ENCODE measurements at regions of chr1 and their contacts with region 1.

Region 1: DNA sequence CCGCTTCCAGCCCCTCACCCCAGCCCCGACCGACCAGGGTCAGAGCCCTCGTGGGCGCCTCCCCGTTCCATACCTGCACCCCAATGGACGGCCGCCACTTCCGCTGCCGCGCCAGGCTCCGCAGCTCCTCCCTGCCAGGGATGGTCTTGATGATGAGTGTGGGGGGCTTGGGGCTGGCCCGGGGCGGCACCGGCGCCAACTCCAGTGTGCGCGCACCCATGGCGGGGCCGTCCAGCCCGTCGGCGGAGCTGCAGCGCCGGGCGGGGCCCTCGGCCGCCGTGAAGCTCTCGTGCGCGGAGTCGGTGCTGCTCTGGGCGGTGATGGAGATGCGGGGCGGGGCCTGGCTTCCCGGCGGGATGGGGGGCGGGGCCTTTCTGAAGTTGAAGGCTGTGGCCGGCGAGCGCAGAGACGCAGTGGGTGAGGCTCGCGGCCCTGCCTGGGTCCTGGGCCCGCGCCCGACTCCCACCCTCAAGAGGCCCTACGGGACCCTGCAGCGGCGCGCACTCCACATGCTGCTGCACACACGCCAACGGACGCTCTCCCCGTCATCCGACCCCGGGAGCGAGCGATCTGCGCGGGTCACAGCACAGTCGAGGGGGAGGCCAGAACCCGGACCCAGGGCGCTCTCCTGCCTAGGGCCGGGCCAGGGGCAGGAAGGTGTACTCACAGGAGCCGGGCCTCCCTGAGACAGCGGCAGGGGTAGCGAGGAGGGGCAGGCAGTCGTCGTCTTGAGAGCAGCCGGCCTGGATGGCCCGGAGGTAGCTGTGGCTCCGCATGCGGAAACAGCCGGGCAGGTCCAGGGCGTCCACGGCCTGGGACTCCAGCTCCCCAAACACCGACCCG is 26.1 kb upstream of the SMIM12 start:
- DNase-seq: peak; percentile 88
- ATAC-seq: peak; percentile 88
- H3K4me3 Mint-ChIP-seq: peak overlapping the region; percentile 88
- H3K27ac Mint-ChIP-seq: no peak overlapping the region
- H3K4me1 Mint-ChIP-seq: peaks cover 7% of the 10 kb centered on the region; the same call in 1 of the 2 replicates
- H3K27me3 Mint-ChIP-seq: peaks cover 40% of the 10 kb centered on the region
- CTCF ChIP-seq: no peak

Region 2: DNA sequence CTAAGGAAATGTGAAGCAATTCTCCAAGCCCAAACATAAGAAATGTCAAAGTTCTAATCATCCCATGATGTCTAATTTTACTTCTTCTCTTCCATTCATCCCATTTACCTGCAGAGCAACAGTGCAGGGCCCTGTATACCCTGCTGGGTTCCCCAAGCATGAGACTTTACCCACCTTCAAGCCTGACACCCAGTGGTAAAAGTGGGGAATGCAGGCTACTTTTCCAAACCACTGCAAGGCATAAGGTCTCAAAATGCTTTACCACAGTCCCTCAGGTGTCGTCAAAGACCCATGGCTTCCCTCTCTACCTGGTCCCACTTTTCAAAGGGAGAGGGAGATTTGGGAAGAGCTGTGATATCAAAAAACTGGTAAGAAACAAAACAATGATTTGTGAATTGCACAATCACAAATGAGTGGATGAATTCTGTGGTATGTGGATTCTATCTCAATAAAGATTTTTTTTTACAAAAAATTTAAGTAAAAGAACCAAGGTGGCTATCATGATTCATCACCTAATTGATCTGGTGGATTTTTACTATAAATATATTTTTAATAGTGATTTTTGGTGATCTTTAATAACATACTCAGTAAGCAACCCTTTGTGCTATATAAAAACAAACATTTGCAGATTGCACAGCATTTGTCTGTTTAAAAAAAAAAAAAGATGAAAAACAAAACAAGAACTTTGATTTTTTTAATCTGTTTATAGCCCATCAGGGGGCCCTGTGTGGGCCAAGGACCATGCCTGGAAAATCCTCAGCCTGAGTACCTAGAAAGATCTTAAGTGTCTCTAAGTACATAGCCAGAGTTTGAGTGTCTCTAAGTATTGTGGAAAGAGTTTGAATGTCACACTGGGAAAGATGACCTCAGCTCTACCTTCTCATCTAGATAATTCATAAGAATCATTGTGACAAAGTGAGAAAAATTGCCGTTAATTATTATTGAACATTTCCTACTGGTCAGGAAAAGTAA is 203.9 kb before region 1 on chr1:
- CTCF ChIA-PET with region 1: no interaction called
- POLR2A ChIA-PET with region 1: no interaction called
- DNase-seq: peak; percentile 89
- ATAC-seq: peak; percentile 88
- H3K4me3 Mint-ChIP-seq: no peak overlapping the region
- H3K27ac Mint-ChIP-seq: no peak overlapping the region
- H3K4me1 Mint-ChIP-seq: peaks cover 19% of the 10 kb centered on the region
- H3K27me3 Mint-ChIP-seq: peaks cover 8% of the 10 kb centered on the region
- CTCF ChIP-seq: peak; percentile 68

Region 3: DNA sequence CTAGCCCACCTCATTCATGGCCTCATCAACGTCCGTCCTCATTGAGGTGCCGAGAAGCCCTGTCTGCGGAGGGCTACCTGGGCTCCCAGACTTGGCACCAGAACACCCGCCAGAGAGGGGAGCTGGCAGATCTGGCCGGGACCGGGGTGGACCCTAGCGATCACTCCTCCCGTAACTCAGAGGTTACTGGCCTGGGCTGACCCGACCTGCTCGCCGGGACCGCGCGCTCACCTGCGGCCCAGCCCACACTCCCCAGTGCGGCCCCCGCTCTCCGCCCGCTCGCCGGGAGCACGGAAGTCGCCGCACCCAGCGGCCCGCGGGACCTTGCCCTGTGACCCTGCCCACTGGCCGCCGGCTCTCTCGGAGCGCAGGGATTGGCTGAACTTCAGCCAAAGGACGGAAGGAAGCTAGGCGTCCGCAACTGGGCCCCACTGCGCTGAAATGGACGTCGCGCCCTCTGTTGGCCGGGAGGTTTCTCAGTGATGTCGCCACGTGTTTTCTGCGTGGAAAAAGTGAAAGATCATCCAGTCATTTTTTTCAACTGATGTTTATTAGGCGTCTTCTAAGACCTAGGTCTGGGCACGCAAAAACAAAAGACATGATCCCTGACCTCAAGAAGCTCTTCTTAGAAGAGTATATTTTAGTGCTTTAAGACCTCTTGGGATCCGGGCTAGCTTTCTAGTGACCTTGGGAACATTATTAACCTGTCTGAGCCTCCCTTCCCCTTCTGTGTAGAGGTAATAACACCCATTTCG is 26.0 kb before region 1 on chr1 and contains the start of gene SMIM12:
- CTCF ChIA-PET with region 1: interaction called, 41 read pairs
- POLR2A ChIA-PET with region 1: interaction called, 5 read pairs
- DNase-seq: peak; percentile 90
- ATAC-seq: peak; percentile 99
- H3K4me3 Mint-ChIP-seq: peak within 1 kb of the TSS; percentile 98
- H3K27ac Mint-ChIP-seq: peak within 1 kb of the TSS; percentile 68; the same call in 1 of the 2 replicates
- H3K4me1 Mint-ChIP-seq: peaks cover 11% of the 10 kb centered on the region
- H3K27me3 Mint-ChIP-seq: peaks cover 25% of the 10 kb centered on the region
- CTCF ChIP-seq: peak; percentile 15; the same call in 1 of the 2 replicates
- total RNA-seq, gene SMIM12: 34.6 to 41.9 TPM (median 39.6 TPM) in 3 replicates

Region 4: GRCh38 chr1:34865981-34866761 is 19.5 kb before region 1 on chr1:
- CTCF ChIA-PET with region 1: interaction called, 41 read pairs
- POLR2A ChIA-PET with region 1: interaction called, 5 read pairs
- DNase-seq: peak; percentile 93
- ATAC-seq: peak; percentile 78
- H3K4me3 Mint-ChIP-seq: peak overlapping the region; percentile 73
- H3K27ac Mint-ChIP-seq: no peak overlapping the region
- H3K4me1 Mint-ChIP-seq: 0 out of 2 replicates have a peak, but pooled peaks cover 2% of the 10 kb centered on the region
- H3K27me3 Mint-ChIP-seq: peaks cover 45% of the 10 kb centered on the region
- CTCF ChIP-seq: peak; percentile 99

Region 5: GRCh38 chr1:34929497-34929852 is 43.8 kb after region 1 on chr1 and contains the start of gene DLGAP3:
- CTCF ChIA-PET with region 1: interaction called, 17 read pairs
- POLR2A ChIA-PET with region 1: interaction called, 6 read pairs
- DNase-seq: peak; percentile 44
- ATAC-seq: peak; percentile 26; the same call in 1 of the 2 replicates
- H3K4me3 Mint-ChIP-seq: peak within 1 kb of the TSS; percentile 83
- H3K27ac Mint-ChIP-seq: no peak within 1 kb of the TSS
- H3K4me1 Mint-ChIP-seq: peaks cover 21% of the 10 kb centered on the region
- H3K27me3 Mint-ChIP-seq: peaks cover 58% of the 10 kb centered on the region
- CTCF ChIP-seq: no peak
- total RNA-seq, gene DLGAP3: 8.2 to 11.3 TPM (median 9.7 TPM) in 3 replicates